CD8-positive, alpha-beta T cell (primary cell): ENCODE measurements at regions of chr11 and their contacts with region 1.

Region 1: GRCh38 chr11:65111744-65112414 is at the start of gene TM7SF2:
- DNase-seq: peak; percentile 83 to 96 (median 95)
- ATAC-seq: peak; percentile 70
- H3K4me3 ChIP-seq: peak within 1 kb of the TSS; percentile 73 to 84
- H3K4me3 Mint-ChIP-seq: peak within 1 kb of the TSS; percentile 86
- H3K27ac ChIP-seq: peak within 1 kb of the TSS; percentile 67 to 74
- H3K27ac Mint-ChIP-seq: peak within 1 kb of the TSS; percentile 87
- H3K4me1 ChIP-seq: peaks cover 48% of the 10 kb centered on the region
- H3K4me1 Mint-ChIP-seq: peaks cover 38% of the 10 kb centered on the region
- H3K27me3 ChIP-seq: no peaks in the 10 kb centered on the region
- H3K27me3 Mint-ChIP-seq: no peaks in the 10 kb centered on the region
- CTCF ChIP-seq: no peak
- total RNA-seq, gene TM7SF2: 20.7 to 23.8 TPM

Region 2: GRCh38 chr11:64878494-64879243 is 233.2 kb before region 1 on chr11 and contains the start of gene EHD1:
- CTCF ChIA-PET with region 1: interaction called, 3 read pairs
- POLR2A ChIA-PET with region 1: no interaction called
- intact Hi-C with region 1: loop called in 1 of 2 experiments (anchors 2 kb)
- DNase-seq: peak; percentile 99 to 100 (median 100)
- ATAC-seq: peak; percentile 82
- H3K4me3 ChIP-seq: peak within 1 kb of the TSS; percentile 87 to 100
- H3K4me3 Mint-ChIP-seq: peak within 1 kb of the TSS; percentile 95
- H3K27ac ChIP-seq: peak within 1 kb of the TSS; percentile 91 to 96
- H3K27ac Mint-ChIP-seq: peak within 1 kb of the TSS; percentile 97
- H3K4me1 ChIP-seq: peaks cover 57% of the 10 kb centered on the region
- H3K4me1 Mint-ChIP-seq: peaks cover 63% of the 10 kb centered on the region
- H3K27me3 ChIP-seq: no peaks in the 10 kb centered on the region
- H3K27me3 Mint-ChIP-seq: no peaks in the 10 kb centered on the region
- CTCF ChIP-seq: peak; percentile 29
- total RNA-seq, gene EHD1: 187 to 212 TPM

Region 3: GRCh38 chr11:65040847-65041621 is 70.8 kb before region 1 on chr11 and contains the start of gene SAC3D1:
- CTCF ChIA-PET with region 1: interaction called, 3 read pairs
- POLR2A ChIA-PET with region 1: interaction called, 10 read pairs
- intact Hi-C with region 1: loop called in 1 of 2 experiments (anchors 5 kb)
- DNase-seq: peak; percentile 67 to 94 (median 85)
- ATAC-seq: peak; percentile 90
- H3K4me3 ChIP-seq: peak within 1 kb of the TSS; percentile 63 to 76
- H3K4me3 Mint-ChIP-seq: peak within 1 kb of the TSS; percentile 93
- H3K27ac ChIP-seq: peak within 1 kb of the TSS; percentile 34 to 82
- H3K27ac Mint-ChIP-seq: peak within 1 kb of the TSS; percentile 91
- H3K4me1 ChIP-seq: peaks cover 17% of the 10 kb centered on the region
- H3K4me1 Mint-ChIP-seq: peaks cover 15% of the 10 kb centered on the region
- H3K27me3 ChIP-seq: no peaks in the 10 kb centered on the region
- H3K27me3 Mint-ChIP-seq: no peaks in the 10 kb centered on the region
- CTCF ChIP-seq: no peak
- total RNA-seq, gene SAC3D1: 0.57 to 0.94 TPM

Region 4: DNA sequence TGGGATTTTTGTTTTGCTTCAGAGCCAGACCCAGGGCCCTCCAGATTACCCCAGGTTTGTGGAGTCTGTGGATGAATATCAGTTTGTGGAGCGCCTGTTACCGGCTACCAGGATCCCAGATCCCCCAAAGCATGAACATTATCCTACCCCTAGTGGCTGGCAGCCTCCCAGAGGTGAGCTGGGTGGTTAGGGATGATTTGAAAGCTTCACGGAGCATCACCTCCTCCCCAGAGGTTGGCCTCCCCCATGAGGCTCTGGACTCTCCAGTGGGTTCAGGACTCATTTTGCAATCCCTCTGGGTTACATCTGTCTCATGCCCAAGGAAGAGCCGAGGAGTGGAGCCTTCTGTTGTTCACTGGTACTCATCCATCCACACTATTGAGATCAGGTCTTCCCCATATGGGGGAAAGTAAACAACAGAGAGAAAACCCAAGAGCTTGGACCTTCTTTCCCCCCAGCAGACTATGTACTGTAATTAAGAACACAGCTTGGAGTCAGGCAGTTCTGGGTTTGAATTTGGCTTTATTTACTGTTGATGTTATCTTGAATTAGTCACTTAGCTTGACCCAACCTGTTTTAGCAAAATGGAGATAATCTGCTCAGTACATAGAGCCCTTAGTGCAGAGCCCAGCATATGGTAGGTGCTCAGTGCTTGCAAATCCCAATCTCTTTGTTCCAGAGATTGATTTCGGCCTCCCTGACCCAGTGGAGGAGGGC is 12.8 kb after region 1 on chr11:
- CTCF ChIA-PET with region 1: interaction called, 21 read pairs
- POLR2A ChIA-PET with region 1: interaction called, 36 read pairs
- intact Hi-C with region 1: loop called in 1 of 2 experiments (anchors 1 kb)
- DNase-seq: peak in 1 of 9 experiments; percentile 4
- ATAC-seq: no peak
- H3K4me3 ChIP-seq: no peak overlapping the region
- H3K4me3 Mint-ChIP-seq: peak overlapping the region; percentile 53
- H3K27ac ChIP-seq: no peak overlapping the region
- H3K27ac Mint-ChIP-seq: no peak overlapping the region
- H3K4me1 ChIP-seq: peaks cover 18% of the 10 kb centered on the region
- H3K4me1 Mint-ChIP-seq: peaks cover 35% of the 10 kb centered on the region
- H3K27me3 ChIP-seq: no peaks in the 10 kb centered on the region
- H3K27me3 Mint-ChIP-seq: no peaks in the 10 kb centered on the region
- CTCF ChIP-seq: no peak

Region 5: DNA sequence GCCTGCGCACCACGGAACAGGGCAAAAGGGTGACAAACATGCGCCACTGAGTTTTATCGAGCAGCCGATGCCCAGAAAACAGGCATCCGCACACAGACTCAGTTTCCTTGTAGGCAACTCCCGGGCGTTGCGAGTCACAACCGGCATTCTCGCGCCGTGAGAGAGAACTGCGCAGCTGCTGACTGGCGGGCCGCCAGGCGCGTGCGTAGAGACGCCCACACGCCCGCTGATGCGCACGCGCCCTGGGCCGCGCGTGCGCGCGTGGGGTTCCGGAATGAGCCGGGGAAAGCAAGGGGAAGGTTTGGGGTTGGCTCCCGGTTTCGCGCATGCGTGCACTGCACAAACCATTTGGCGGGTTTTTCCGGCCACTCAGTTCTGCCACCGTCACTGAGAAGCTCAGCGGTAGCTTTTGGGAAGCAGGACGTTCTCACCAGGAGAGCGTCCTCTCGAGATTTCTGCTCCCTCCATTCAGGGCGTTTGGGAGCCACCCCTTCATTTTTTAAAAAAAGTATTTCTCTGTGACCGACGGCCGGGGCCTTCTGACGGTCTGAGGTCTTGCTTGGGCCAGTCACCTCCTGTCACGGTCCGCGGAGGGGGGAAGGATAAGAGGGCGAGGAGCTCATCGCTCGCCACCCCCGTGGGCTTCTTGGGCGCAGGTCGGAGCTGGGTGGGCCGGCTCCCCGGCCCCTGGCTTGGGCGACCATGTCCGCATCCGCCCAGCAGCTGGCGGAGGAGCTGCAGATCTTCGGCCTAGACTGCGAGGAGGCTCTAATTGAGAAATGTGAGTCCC is 149.9 kb after region 1 on chr11 and contains the start of gene POLA2:
- CTCF ChIA-PET with region 1: no interaction called
- POLR2A ChIA-PET with region 1: no interaction called
- intact Hi-C with region 1: loop called in 1 of 2 experiments (anchors 5 kb)
- DNase-seq: peak; percentile 90 to 99 (median 95)
- ATAC-seq: peak; percentile 95
- H3K4me3 ChIP-seq: peak within 1 kb of the TSS; percentile 79 to 85
- H3K4me3 Mint-ChIP-seq: peak within 1 kb of the TSS; percentile 93
- H3K27ac ChIP-seq: peak within 1 kb of the TSS; percentile 85 to 93
- H3K27ac Mint-ChIP-seq: peak within 1 kb of the TSS; percentile 95
- H3K4me1 ChIP-seq: peaks cover 14% of the 10 kb centered on the region
- H3K4me1 Mint-ChIP-seq: peaks cover 43% of the 10 kb centered on the region
- H3K27me3 ChIP-seq: no peaks in the 10 kb centered on the region
- H3K27me3 Mint-ChIP-seq: no peaks in the 10 kb centered on the region
- CTCF ChIP-seq: no peak
- total RNA-seq, gene POLA2: 8.5 to 9.3 TPM